ENCODE measurements at regions of chr3 and their contacts with region 1.

Region 1: GRCh38 chr3:192816351-192816750 is 89.0 kb upstream of the FGF12 start:
- DNase-seq: peak; percentile 14
- H3K4me3 ChIP-seq: no peak overlapping the region
- H3K27ac ChIP-seq: no peak overlapping the region
- H3K4me1 ChIP-seq: no peaks in the 10 kb centered on the region
- H3K27me3 ChIP-seq: no peaks in the 10 kb centered on the region
- CTCF ChIP-seq: peak in 3 of 4 experiments; percentile 65 to 77 (median 76)
- POLR2A ChIP-seq: no peak

Region 2: GRCh38 chr3:192917404-192918274 is 101.3 kb after region 1 on chr3 and contains the start of gene MB21D2:
- intact Hi-C with region 1: loop called (anchors 5 kb)
- DNase-seq: peak; percentile 56
- H3K4me3 ChIP-seq: peak within 1 kb of the TSS; percentile 53 to 65
- H3K27ac ChIP-seq: peak within 1 kb of the TSS; percentile 77 to 79
- H3K4me1 ChIP-seq: no peaks in the 10 kb centered on the region
- H3K27me3 ChIP-seq: peaks cover 2% of the 10 kb centered on the region
- CTCF ChIP-seq: peak in 1 of 4 experiments; percentile 9
- POLR2A ChIP-seq: no peak
- total RNA-seq, gene MB21D2: 1.8 to 20.4 TPM

Region 3: DNA sequence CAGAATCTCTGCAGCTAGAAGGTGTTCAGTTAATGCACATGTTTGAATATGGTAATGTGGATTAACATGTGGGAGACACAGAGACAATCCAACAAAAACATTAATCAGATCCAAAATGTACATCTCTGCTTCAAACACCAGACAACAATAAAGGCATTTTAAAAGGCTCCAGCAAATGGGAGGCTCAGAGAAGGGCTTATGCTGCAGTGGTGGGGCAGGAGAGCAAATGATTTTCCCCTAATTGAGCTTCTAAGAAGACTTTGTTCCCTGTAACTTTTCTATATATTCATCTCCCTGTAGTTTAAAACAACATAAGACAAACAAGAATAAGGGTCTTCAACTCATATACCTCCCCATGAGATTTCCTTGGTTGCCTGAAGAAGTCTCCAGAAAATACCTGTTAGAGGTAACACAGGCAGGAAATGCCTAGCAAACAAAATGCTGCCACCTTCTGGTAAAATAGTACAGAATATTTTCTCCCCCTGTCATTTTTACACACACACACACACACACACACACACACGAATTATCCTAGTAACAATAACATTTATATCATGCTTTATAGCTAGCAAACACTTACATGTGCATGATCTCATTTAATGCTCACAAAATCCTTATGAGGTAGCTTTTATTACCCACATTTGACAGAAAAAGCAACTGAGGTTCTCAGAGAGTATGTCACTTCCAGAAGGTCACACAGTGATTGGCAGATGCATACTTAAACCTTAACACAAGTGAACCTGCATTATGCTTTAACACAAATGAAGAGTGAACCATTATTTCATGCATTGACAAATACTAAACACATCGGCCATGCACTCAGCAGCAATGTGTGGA is 224.7 kb after region 1 on chr3:
- intact Hi-C with region 1: loop called (anchors 2 kb)
- DNase-seq: peak; percentile 13
- H3K4me3 ChIP-seq: no peak overlapping the region
- H3K27ac ChIP-seq: no peak overlapping the region
- H3K4me1 ChIP-seq: no peaks in the 10 kb centered on the region
- H3K27me3 ChIP-seq: no peaks in the 10 kb centered on the region
- CTCF ChIP-seq: peak in 3 of 4 experiments; percentile 55 to 66 (median 60)
- POLR2A ChIP-seq: no peak

Region 4: DNA sequence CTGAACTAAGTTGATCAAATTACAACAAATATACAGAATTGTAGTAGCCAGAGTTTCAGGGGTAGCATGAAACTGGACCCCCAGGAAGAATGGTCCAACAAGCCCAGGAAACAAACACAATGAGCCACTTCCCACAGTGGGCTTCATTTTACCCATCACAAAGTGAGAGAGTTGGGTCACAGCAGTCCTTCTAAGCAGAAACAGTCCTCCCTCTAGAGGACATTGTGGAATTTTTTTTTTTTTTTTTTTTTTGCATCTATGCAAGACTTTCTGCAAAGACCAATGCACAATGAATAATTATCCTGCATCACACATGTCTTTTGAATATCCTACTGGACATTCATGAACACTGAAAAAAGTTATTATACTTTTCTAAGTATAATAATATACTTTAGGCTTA is 636.0 kb after region 1 on chr3:
- intact Hi-C with region 1: loop called (anchors 10 kb)
- DNase-seq: no peak
- H3K4me3 ChIP-seq: no peak overlapping the region
- H3K27ac ChIP-seq: no peak overlapping the region
- H3K4me1 ChIP-seq: no peaks in the 10 kb centered on the region
- H3K27me3 ChIP-seq: no peaks in the 10 kb centered on the region
- CTCF ChIP-seq: no peak
- POLR2A ChIP-seq: no peak

Region 5: DNA sequence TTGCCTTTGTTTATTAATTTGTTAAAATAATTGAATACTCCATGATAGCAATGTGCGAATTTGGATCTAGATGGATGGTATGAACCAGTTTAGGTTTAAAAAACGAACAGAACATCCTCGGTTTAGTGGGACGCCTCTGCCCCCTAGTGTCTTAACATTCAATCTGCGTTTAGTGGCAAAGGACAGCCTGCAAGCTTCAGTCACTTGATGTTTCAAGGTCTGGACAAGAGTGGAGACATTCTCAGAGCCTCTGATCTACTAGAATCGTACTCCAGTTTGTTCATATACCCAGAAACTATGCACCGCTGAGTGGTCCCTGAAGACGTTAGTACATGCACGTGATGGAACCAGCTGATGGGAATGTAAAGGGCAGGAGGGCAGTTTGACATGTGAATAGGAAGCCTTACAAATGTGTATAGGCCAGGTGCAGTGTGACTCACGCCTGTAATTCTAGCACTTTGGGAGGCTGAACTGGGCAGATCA is 756.1 kb after region 1 on chr3:
- intact Hi-C with region 1: loop called (anchors 5 kb)
- DNase-seq: peak; percentile 39
- H3K4me3 ChIP-seq: no peak overlapping the region
- H3K27ac ChIP-seq: no peak overlapping the region
- H3K4me1 ChIP-seq: no peaks in the 10 kb centered on the region
- H3K27me3 ChIP-seq: no peaks in the 10 kb centered on the region
- CTCF ChIP-seq: peak; percentile 28 to 78 (median 60)
- POLR2A ChIP-seq: no peak